PC-3 (cell line): ENCODE measurements at regions of chr5 and their contacts with region 1.

Region 1: DNA sequence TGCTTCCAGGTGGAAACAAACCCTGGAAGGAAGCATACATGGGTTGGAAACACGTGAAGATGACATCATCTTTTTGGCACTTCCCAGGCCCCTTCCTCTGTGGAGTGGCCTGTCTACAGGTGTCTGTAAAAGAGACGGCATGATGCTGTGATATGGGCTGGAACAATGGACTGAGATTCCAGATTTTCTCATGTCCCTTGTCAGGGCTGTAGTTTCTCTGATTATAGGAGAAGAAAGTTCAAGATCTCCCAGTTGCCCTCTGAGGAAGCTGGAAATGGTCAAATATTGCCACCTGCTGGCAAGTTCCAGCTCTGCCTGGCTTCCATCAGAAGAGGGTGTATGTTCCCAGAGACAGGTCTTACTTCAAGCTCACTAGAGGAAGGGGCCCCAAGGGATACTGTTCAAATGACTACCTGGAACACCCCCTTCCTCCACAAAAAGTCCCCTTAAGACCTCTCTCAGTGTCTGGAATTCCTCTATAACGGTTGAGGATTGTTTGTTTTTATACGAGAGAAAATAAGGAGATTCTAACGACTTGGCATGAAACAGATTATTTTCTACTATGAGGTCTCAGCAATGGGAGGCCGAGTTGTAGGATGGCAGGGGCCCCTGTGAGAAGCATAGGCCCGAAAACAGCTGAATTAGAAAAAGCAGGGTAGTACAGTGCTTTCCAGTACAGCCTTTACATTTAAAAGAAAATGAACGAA is 7.3 kb upstream of the ANXA6 start:
- DNase-seq: peak; percentile 90
- ATAC-seq: peak; percentile 99
- H3K4me3 ChIP-seq: no peak overlapping the region
- H3K27ac ChIP-seq: no peak overlapping the region
- H3K4me1 ChIP-seq: no peaks in the 10 kb centered on the region
- H3K27me3 ChIP-seq: no peaks in the 10 kb centered on the region
- CTCF ChIP-seq: peak; percentile 96

Region 2: GRCh38 chr5:150801117-150801927 is 363.5 kb before region 1 on chr5:
- CTCF ChIA-PET with region 1: no interaction called
- POLR2A ChIA-PET with region 1: no interaction called
- intact Hi-C with region 1: loop called (anchors 1 kb)
- DNase-seq: peak; percentile 82
- ATAC-seq: peak; percentile 93
- H3K4me3 ChIP-seq: peak overlapping the region; percentile 62
- H3K27ac ChIP-seq: no peak overlapping the region
- H3K4me1 ChIP-seq: no peaks in the 10 kb centered on the region
- H3K27me3 ChIP-seq: no peaks in the 10 kb centered on the region
- CTCF ChIP-seq: peak; percentile 67

Region 3: GRCh38 chr5:151051066-151051930 is 113.5 kb before region 1 on chr5:
- CTCF ChIA-PET with region 1: interaction called, 7 read pairs
- POLR2A ChIA-PET with region 1: no interaction called
- intact Hi-C with region 1: loop called (anchors 5 kb)
- DNase-seq: peak; percentile 84
- ATAC-seq: peak; percentile 78
- H3K4me3 ChIP-seq: no peak overlapping the region
- H3K27ac ChIP-seq: no peak overlapping the region
- H3K4me1 ChIP-seq: no peaks in the 10 kb centered on the region
- H3K27me3 ChIP-seq: no peaks in the 10 kb centered on the region
- CTCF ChIP-seq: peak; percentile 97

Region 4: GRCh38 chr5:151126199-151126645 is 38.6 kb before region 1 on chr5:
- CTCF ChIA-PET with region 1: interaction called, 25 read pairs
- POLR2A ChIA-PET with region 1: no interaction called
- intact Hi-C with region 1: loop called (anchors 1 kb)
- DNase-seq: peak; percentile 64
- ATAC-seq: peak; percentile 70
- H3K4me3 ChIP-seq: no peak overlapping the region
- H3K27ac ChIP-seq: no peak overlapping the region
- H3K4me1 ChIP-seq: no peaks in the 10 kb centered on the region
- H3K27me3 ChIP-seq: no peaks in the 10 kb centered on the region
- CTCF ChIP-seq: peak; percentile 91

Region 5: DNA sequence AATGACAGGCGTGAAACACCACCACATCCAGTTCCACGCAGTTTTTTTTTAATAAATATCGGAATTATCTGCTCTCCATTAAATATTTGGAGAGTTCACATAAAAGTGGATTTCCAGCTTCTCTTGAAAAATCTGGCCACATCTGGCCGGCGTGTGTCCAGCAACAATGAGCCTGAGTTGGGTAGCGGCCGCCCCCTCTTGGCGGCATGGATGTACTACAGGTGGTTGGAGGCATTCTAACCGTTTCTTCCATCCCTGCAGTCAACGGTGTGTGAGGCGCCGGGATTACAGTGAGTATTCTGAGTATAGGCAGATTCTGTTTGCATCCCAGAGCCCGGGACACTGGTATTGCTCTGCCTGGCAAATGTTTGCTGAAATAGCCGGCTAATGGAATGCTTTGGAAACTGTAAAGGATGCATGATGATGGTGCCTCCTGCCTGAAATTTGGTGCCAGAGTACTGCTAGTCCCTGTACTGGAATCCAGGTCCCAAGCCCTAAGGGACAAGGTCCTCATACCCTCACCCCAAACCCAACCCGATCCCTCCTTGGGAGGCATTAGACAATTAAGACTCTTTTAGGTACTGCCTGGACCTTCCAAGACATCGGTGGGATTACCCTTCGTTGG is 74.5 kb after region 1 on chr5:
- CTCF ChIA-PET with region 1: interaction called, 9 read pairs
- POLR2A ChIA-PET with region 1: no interaction called
- intact Hi-C with region 1: loop called (anchors 5 kb)
- DNase-seq: peak; percentile 77
- ATAC-seq: peak; percentile 93
- H3K4me3 ChIP-seq: no peak overlapping the region
- H3K27ac ChIP-seq: no peak overlapping the region
- H3K4me1 ChIP-seq: peaks cover 5% of the 10 kb centered on the region
- H3K27me3 ChIP-seq: no peaks in the 10 kb centered on the region
- CTCF ChIP-seq: peak; percentile 94

Region 6: GRCh38 chr5:151357801-151358200 is 193.0 kb after region 1 on chr5:
- CTCF ChIA-PET with region 1: no interaction called
- POLR2A ChIA-PET with region 1: interaction called, 14 read pairs
- intact Hi-C with region 1: no loop called
- DNase-seq: peak; percentile 80
- ATAC-seq: peak; percentile 74
- H3K4me3 ChIP-seq: no peak overlapping the region; the same call in 1 of the 2 replicates
- H3K27ac ChIP-seq: peak overlapping the region; percentile 53
- H3K4me1 ChIP-seq: peaks cover 26% of the 10 kb centered on the region
- H3K27me3 ChIP-seq: no peaks in the 10 kb centered on the region
- CTCF ChIP-seq: no peak